ENCODE measurements at regions of chr4 and their contacts with region 1.

Region 1: DNA sequence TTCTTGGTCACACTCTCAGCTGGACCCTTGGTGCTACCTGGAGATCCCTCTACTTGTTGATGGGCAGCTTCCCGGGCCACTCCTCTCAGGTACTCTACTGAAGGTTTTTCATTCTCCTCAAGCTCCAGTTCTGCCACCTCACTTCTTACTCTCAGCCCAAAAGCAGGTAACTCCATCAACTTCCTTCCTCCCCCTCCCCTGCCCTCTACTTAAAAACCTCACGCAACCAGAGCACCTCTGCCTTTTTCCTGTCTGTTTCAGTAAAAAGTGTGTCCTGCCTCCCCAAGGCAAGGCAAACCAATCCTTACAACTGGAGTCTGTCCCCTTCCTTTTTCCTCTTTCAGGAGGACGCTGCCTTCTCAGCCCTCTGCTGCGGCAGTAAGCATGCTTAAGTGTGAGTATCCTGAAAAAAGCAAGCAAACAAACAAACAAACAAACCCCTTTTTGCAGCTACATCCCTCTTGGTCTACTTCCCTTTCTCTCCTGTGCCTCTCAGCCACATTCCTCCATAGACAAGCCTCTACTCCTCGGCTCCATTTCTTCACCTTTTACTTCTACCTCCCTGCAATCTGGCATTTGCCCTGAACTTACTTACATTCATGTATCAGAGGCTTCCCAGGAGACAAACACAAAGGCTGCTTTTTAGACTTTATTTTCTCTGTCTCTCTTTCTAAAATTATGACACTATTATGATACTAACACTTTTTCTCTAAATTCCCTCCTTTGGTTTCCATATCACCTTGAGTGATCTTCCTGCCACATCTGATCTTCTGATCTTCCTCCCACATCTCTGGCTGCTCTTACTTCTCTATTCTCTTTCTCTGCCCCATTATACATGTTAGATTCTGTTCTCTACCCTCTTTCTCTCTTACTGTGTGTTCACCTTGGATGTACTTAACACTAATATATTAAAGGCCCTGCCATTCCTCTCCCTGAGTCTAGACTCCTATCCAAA is 5.4 kb downstream of the ALPK1 start:
- DNase-seq: no peak
- ATAC-seq: peak; percentile 71
- H3K4me3 Mint-ChIP-seq: no peak overlapping the region
- H3K27ac Mint-ChIP-seq: no peak overlapping the region
- H3K4me1 Mint-ChIP-seq: peaks cover 19% of the 10 kb centered on the region
- H3K27me3 Mint-ChIP-seq: no peaks in the 10 kb centered on the region

Region 2: GRCh38 chr4:112321776-112322684 is 19.4 kb after region 1 on chr4:
- CTCF ChIA-PET with region 1: interaction called, 10 read pairs
- POLR2A ChIA-PET with region 1: interaction called, 3 read pairs
- DNase-seq: peak; percentile 89
- ATAC-seq: peak; percentile 76
- H3K4me3 Mint-ChIP-seq: no peak overlapping the region
- H3K27ac Mint-ChIP-seq: no peak overlapping the region
- H3K4me1 Mint-ChIP-seq: peaks cover 17% of the 10 kb centered on the region
- H3K27me3 Mint-ChIP-seq: no peaks in the 10 kb centered on the region